CD14-positive monocyte (primary cell): ENCODE measurements at regions of chr10 and their contacts with region 1.

Region 1: GRCh38 chr10:101840741-101841453 is 2.7 kb downstream of the KCNIP2 start:
- DNase-seq: peak; percentile 68 to 78 (median 68)
- H3K4me3 ChIP-seq: peak overlapping the region in 2 of 3 experiments; percentile 13 to 70
- H3K4me3 Mint-ChIP-seq: peak overlapping the region; percentile 80 to 90
- H3K27ac ChIP-seq: no peak overlapping the region
- H3K27ac Mint-ChIP-seq: peak overlapping the region in 5 of 7 donors; percentile 32 to 69 (median 53)
- H3K4me1 ChIP-seq: peaks cover 33 to 47% of the 10 kb centered on the region in 2 donors
- H3K4me1 Mint-ChIP-seq: peaks cover 50% of the 10 kb centered on the region
- H3K27me3 ChIP-seq: peaks cover 5 to 16% of the 10 kb centered on the region in 2 donors
- H3K27me3 Mint-ChIP-seq: peaks cover 27 to 42% (median 31%) of the 10 kb centered on the region in 3 donors
- CTCF ChIP-seq: peak; percentile 93

Region 2: DNA sequence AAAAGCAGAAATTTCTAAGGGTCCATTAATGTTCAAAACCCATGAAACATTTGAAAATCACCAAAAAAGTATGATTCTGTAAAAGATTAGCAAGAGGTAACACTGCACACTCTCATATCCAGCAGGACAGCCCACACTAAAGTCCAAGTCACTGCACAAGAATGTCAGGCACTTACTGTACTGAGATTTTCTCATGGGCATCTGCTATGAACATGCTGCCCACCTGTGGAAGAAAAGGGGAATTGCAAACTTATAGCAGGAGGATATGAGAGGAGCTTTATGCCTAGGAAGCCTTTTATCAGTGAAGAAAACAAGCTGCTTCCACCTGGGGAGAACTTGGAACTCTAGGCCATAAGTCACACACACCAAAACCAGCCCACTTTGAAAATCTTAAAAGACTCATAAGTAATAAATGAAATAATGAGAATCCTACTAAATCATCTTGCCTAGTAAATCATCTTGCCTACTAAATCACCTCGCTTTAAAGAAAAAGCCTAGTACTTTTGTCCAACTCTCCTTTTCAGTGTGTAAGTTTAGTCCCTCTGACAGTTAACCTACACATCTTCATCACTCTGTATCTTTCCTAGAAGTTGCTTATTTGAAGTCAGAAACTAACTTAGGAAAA is 169.0 kb after region 1 on chr10:
- intact Hi-C with region 1: loop called (anchors 5 kb)
- DNase-seq: peak; percentile 53 to 68 (median 63)
- H3K4me3 ChIP-seq: no peak overlapping the region
- H3K4me3 Mint-ChIP-seq: no peak overlapping the region
- H3K27ac ChIP-seq: peak overlapping the region in 1 of 2 donors; percentile 52
- H3K27ac Mint-ChIP-seq: peak overlapping the region in 1 of 7 donors; percentile 57
- H3K4me1 ChIP-seq: peaks cover 25 to 26% of the 10 kb centered on the region in 2 donors
- H3K4me1 Mint-ChIP-seq: peaks cover 34% of the 10 kb centered on the region
- H3K27me3 ChIP-seq: no peaks in the 10 kb centered on the region
- H3K27me3 Mint-ChIP-seq: no peaks in the 10 kb centered on the region
- CTCF ChIP-seq: peak; percentile 84

Region 3: DNA sequence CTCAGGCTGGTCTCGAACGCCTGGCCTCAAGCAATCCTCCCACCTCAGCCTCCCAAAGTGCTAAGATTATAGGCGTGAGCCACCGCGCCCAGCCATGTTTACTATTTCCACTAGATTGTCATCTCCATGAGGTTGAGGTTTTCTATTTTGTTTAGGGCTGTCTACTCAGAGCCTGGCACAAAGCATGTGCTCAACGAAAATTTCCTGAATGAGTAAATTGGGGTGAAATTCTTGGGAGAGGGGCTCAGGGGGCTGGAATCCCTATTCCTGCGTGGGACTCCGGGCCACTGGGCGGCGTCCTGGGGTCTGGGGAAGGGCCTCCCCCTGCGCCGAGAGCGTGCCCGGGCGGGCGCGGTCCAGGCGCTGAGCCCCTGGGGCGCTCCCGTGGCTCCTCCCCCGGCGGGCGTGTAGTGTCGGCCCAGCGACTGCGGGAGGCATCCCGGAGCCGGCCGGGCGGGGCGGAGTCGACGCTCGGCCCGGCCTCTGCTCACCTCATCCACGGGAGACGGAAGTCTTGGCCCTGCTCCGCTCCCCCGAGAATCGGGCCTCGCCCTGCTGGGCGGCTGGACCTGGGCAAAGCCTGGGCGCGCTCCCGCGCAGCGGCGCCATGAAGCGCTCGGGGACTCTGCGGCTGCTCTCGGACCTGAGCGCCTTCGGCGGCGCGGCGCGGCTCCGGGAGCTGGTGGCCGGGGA is 224.1 kb after region 1 on chr10 and contains the start of gene HPS6:
- intact Hi-C with region 1: loop called (anchors 5 kb)
- DNase-seq: peak; percentile 85 to 88 (median 86)
- H3K4me3 ChIP-seq: peak within 1 kb of the TSS; percentile 64 to 92 (median 80)
- H3K4me3 Mint-ChIP-seq: peak within 1 kb of the TSS; percentile 81 to 94
- H3K27ac ChIP-seq: peak within 1 kb of the TSS; percentile 49 to 87
- H3K27ac Mint-ChIP-seq: peak within 1 kb of the TSS; percentile 80 to 92 (median 88)
- H3K4me1 ChIP-seq: peaks cover 44 to 50% of the 10 kb centered on the region in 2 donors
- H3K4me1 Mint-ChIP-seq: peaks cover 44% of the 10 kb centered on the region
- H3K27me3 ChIP-seq: no peaks in the 10 kb centered on the region
- H3K27me3 Mint-ChIP-seq: peaks cover 1 to 4% (median 1%) of the 10 kb centered on the region in 3 donors
- CTCF ChIP-seq: no peak
- polyA plus RNA-seq, gene HPS6: 2.9 to 27.3 (median 23.6) TPM

Region 4: GRCh38 chr10:102072673-102073527 is 232.0 kb after region 1 on chr10:
- intact Hi-C with region 1: loop called (anchors 5 kb)
- DNase-seq: peak; percentile 67 to 80 (median 76)
- H3K4me3 ChIP-seq: no peak overlapping the region
- H3K4me3 Mint-ChIP-seq: no peak overlapping the region
- H3K27ac ChIP-seq: no peak overlapping the region
- H3K27ac Mint-ChIP-seq: no peak overlapping the region
- H3K4me1 ChIP-seq: peaks cover 18 to 24% of the 10 kb centered on the region in 2 donors
- H3K4me1 Mint-ChIP-seq: peaks cover 35% of the 10 kb centered on the region
- H3K27me3 ChIP-seq: no peaks in the 10 kb centered on the region
- H3K27me3 Mint-ChIP-seq: no peaks in the 10 kb centered on the region
- CTCF ChIP-seq: peak; percentile 89

Region 5: DNA sequence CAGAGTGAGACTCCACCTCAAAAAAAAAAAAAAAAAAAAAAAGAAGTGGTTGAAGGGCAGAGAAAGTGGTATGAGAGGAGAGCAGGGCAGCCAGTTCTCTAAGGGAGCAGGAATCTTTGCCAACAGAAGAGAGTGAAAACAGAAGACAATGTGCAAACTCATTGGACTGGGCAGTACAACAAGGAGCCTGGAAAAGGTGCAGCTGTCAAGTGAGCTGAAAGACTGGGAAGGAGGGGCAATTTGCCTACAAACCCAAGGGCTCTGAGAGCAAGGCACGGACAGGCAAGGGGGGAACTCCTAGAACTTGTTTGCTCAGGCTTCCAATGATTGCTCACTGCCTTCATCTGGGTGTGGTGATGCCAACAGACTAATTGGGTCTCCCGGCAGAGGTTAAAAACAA is 652.1 kb after region 1 on chr10:
- intact Hi-C with region 1: no loop called
- DNase-seq: no peak
- H3K4me3 ChIP-seq: no peak overlapping the region
- H3K4me3 Mint-ChIP-seq: no peak overlapping the region
- H3K27ac ChIP-seq: peak overlapping the region in 1 of 2 donors; percentile 18
- H3K27ac Mint-ChIP-seq: peak overlapping the region in 4 of 7 donors; percentile 28 to 75 (median 42)
- H3K4me1 ChIP-seq: no peaks in the 10 kb centered on the region
- H3K4me1 Mint-ChIP-seq: peaks cover 7% of the 10 kb centered on the region
- H3K27me3 ChIP-seq: no peaks in the 10 kb centered on the region
- H3K27me3 Mint-ChIP-seq: no peaks in the 10 kb centered on the region
- CTCF ChIP-seq: no peak